ENCODE measurements at regions of chr6 and their contacts with region 1.

Region 1: DNA sequence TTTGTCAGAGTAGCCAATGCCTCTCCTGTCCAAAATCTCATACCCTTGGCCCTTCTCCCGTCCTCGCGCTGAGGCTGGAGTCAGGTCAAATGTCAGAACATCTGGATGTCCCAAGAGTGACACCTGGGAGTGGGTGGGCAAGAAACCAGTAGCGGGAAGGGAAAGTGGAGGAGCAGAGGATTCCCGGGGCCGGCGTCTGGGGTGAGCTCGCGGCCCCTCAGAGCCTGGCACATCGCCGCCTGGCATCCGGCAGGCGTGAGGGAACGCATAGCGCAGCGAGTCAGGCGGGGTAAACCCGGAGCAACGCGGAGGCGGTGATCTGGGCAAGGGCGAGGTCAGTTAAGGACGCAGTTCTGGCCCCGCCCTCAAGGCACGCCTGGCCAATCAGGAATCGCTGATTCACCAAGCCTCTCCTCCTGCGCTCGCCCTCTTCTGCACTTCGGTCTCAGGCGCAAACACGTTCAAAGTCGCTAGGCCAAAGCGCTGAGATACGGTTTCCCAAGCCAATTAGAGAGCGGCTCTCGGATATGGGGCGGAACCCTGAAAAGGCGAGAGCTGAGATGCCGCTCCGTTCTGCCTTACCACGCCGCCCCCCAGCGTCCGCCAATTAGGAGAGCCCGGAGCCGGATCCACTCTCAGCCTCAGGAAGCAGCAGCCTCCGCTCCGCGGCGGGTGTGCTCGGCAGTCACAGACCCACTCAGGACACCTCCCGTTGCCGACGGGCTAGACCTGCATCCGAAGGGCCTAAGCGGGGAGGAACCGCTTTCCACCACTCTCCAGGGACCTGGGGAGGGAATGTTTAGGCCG is 22.5 kb downstream of the VPS52 start:
- DNase-seq: peak; percentile 86
- ATAC-seq: peak; percentile 84
- H3K4me3 Mint-ChIP-seq: peak overlapping the region; percentile 91
- H3K27ac Mint-ChIP-seq: peak overlapping the region; percentile 91
- H3K4me1 Mint-ChIP-seq: peaks cover 28% of the 10 kb centered on the region
- H3K27me3 Mint-ChIP-seq: no peaks in the 10 kb centered on the region
- CTCF ChIP-seq: no peak

Region 2: GRCh38 chr6:32558426-32559057 is 690.6 kb before region 1 on chr6:
- CTCF ChIA-PET with region 1: no interaction called
- POLR2A ChIA-PET with region 1: no interaction called
- intact Hi-C with region 1: no loop called
- DNase-seq: no peak
- ATAC-seq: peak; percentile 54
- H3K4me3 Mint-ChIP-seq: peak overlapping the region; percentile 77
- H3K27ac Mint-ChIP-seq: peak overlapping the region; percentile 85
- H3K4me1 Mint-ChIP-seq: peaks cover 18% of the 10 kb centered on the region
- H3K27me3 Mint-ChIP-seq: no peaks in the 10 kb centered on the region
- CTCF ChIP-seq: no peak

Region 3: GRCh38 chr6:32984605-32985389 is 264.3 kb before region 1 on chr6:
- CTCF ChIA-PET with region 1: interaction called, 12 read pairs
- POLR2A ChIA-PET with region 1: interaction called, 3 read pairs
- intact Hi-C with region 1: no loop called
- DNase-seq: peak; percentile 74
- ATAC-seq: peak; percentile 90
- H3K4me3 Mint-ChIP-seq: no peak overlapping the region
- H3K27ac Mint-ChIP-seq: peak overlapping the region; percentile 73
- H3K4me1 Mint-ChIP-seq: peaks cover 32% of the 10 kb centered on the region
- H3K27me3 Mint-ChIP-seq: no peaks in the 10 kb centered on the region
- CTCF ChIP-seq: no peak

Region 4: DNA sequence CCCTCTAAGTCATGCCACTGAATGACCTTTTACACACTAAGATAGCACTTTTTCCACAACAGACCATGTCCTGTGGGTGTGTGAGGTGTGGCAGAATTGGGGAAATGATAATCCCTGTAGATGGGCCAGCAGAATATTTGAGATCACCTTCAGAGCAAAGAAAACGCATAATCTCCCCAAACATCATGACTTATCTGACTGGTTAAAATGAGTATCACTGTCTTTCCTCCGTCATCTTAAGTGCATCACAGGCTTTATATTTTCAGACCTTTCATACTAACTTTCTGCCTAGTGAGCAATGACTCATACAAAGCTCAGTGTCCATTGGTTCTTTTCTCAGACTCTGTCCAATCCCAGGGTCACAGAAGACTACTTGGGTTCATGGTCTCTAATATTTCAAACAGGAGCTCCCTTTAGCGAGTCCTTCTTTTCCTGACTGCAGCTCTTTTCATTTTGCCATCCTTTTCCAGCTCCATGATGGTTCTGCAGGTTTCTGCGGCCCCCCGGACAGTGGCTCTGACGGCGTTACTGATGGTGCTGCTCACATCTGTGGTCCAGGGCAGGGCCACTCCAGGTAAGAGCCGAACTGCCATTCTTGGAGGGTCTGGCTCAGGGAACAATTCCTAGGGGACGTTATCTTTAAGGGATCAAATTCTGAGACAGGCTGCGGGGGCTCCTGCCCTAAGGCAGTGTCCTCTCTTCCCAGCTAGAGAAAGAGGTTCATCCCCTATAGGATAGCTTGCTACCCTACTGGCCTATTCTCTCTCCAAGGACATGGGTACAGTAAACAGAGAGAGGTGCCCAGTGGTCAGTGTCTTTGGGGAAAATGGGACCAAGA is 173.3 kb before region 1 on chr6 and contains the start of gene HLA-DPB1:
- CTCF ChIA-PET with region 1: no interaction called
- POLR2A ChIA-PET with region 1: interaction called, 27 read pairs
- intact Hi-C with region 1: no loop called
- DNase-seq: peak; percentile 42
- ATAC-seq: peak; percentile 76
- H3K4me3 Mint-ChIP-seq: peak within 1 kb of the TSS; percentile 95
- H3K27ac Mint-ChIP-seq: peak within 1 kb of the TSS; percentile 99
- H3K4me1 Mint-ChIP-seq: peaks cover 66% of the 10 kb centered on the region
- H3K27me3 Mint-ChIP-seq: no peaks in the 10 kb centered on the region
- CTCF ChIP-seq: no peak
- total RNA-seq, gene HLA-DPB1: 853 and 854 TPM in 2 replicates

Region 5: DNA sequence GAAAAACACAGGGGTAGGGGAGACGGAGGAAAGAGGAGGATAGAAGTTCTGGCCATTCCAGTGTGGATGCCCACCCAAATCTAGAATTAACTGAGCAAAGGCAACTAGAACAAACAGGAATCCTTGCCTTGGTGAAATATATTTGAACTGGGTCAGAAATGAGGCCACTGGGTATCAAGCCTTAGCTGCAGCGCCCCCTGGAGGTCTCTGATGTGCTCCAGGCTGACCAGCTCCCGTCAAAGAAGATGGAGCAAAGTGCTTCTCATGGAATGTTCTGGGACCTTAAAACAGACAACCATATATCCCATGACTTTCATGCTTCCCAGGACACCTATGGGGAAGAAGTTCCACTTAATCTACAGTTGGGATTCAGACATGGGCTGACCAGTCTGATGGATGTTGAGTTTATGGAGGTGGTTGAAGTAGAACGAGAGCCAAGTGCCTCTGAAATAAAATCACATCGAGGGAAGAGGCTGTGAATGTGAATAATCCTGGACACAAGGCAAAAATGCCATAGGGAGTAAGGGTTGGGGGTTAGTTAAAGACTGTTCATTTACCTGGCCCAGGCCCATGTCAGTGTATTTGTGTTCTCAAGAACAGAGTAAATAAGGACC is 122.9 kb before region 1 on chr6:
- CTCF ChIA-PET with region 1: interaction called, 11 read pairs
- POLR2A ChIA-PET with region 1: interaction called, 7 read pairs
- intact Hi-C with region 1: loop called (anchors 1 kb)
- DNase-seq: peak; percentile 59
- ATAC-seq: peak; percentile 73
- H3K4me3 Mint-ChIP-seq: no peak overlapping the region
- H3K27ac Mint-ChIP-seq: no peak overlapping the region
- H3K4me1 Mint-ChIP-seq: peaks cover 4% of the 10 kb centered on the region
- H3K27me3 Mint-ChIP-seq: no peaks in the 10 kb centered on the region
- CTCF ChIP-seq: no peak

Region 6: GRCh38 chr6:33200219-33201146 is 48.6 kb before region 1 on chr6 and contains the starts of genes RXRB and SLC39A7:
- CTCF ChIA-PET with region 1: interaction called, 4 read pairs
- POLR2A ChIA-PET with region 1: interaction called, 13 read pairs
- intact Hi-C with region 1: loop called (anchors 1 kb)
- DNase-seq: peak; percentile 89
- ATAC-seq: peak; percentile 74
- H3K4me3 Mint-ChIP-seq: peak within 1 kb of the TSS; percentile 99
- H3K27ac Mint-ChIP-seq: peak within 1 kb of the TSS; percentile 96
- H3K4me1 Mint-ChIP-seq: peaks cover 75% of the 10 kb centered on the region
- H3K27me3 Mint-ChIP-seq: no peaks in the 10 kb centered on the region
- CTCF ChIP-seq: no peak
- total RNA-seq, gene RXRB: 72.4 and 74.3 TPM in 2 replicates
- total RNA-seq, gene SLC39A7: 31.7 and 35.2 TPM in 2 replicates

Region 7: DNA sequence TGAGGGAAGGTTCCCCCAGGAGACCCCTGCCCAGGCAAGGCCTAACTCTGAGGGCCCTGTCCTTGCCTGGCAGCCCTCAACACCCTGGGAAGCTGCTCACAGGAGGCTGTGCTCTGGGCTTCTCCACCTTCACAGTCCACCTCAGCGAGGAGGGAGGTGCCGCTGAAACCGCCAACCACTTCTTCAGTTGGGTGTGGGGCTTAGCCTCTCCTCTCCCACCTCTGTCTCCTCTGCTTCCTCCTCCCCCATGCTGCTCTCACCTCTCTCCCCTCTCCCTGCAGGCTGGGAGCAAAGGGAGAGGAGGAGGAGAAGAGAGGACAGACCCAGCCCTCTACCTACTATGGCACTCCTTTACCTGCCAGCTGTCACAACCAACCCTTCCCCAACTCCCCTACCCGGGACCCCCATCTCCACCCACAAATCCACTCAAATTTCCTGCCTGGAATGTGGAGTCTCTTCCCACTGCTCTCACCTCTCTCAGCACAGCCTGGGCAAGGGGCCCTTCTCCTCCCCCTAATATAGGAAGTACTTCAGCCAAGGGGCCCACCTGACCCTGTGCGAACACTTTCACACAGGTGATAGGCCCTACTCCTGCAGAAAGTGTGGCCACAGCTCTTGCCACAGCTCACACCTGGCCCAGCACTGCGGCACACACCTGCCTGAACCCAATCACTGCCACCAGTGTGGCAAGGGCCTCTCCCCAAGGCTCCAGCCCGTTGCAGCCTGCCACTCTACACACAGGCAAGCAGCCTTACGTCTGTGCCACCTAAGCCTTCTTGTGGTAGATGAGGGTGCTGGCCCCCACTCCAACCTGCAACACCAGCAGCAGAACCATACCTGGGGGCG is 33.6 kb before region 1 on chr6:
- CTCF ChIA-PET with region 1: no interaction called
- POLR2A ChIA-PET with region 1: no interaction called
- intact Hi-C with region 1: no loop called
- DNase-seq: no peak
- ATAC-seq: no peak
- H3K4me3 Mint-ChIP-seq: no peak overlapping the region
- H3K27ac Mint-ChIP-seq: no peak overlapping the region
- H3K4me1 Mint-ChIP-seq: peaks cover 18% of the 10 kb centered on the region
- H3K27me3 Mint-ChIP-seq: peaks cover 45% of the 10 kb centered on the region
- CTCF ChIP-seq: no peak

Region 8: GRCh38 chr6:33276864-33277662 is 27.9 kb after region 1 on chr6 and contains the start of gene B3GALT4:
- CTCF ChIA-PET with region 1: interaction called, 8 read pairs
- POLR2A ChIA-PET with region 1: interaction called, 55 read pairs
- intact Hi-C with region 1: no loop called
- DNase-seq: peak; percentile 77
- ATAC-seq: peak; percentile 68
- H3K4me3 Mint-ChIP-seq: peak within 1 kb of the TSS; percentile 92
- H3K27ac Mint-ChIP-seq: peak within 1 kb of the TSS; percentile 100
- H3K4me1 Mint-ChIP-seq: peaks cover 62% of the 10 kb centered on the region
- H3K27me3 Mint-ChIP-seq: no peaks in the 10 kb centered on the region
- CTCF ChIP-seq: no peak
- total RNA-seq, gene B3GALT4: 19.1 and 19.4 TPM in 2 replicates

Region 9: DNA sequence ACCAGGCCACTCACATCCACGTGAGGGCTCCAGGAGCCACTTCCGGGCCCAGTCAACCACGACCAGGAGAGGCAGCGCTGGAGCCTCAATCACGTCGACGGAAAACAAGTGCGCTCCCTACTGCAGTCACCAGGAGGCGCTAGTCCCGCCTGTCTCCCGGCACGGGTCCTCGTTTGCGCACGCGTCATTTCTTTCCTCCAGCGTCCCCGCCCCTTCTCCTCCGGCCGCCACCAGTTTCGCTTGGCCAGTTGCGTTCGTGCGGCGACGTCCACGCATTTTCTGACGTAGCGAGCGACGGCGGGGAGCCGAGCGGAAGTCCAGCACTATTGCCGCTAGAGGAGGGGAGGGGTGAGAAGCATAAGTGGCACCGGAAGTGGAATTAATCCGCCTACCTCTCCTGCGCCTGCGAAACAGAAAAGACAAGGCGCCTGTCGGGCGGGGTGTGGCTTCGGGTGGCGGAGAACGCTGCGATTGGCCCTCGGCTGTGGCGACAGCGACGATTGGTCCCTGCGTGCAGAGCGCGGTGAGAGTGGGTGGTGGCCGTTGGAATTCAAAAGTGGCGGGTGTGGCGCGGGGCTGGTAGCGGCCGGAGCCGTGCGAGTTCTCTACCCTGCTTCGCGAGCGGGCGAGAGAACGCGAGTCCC is 142.3 kb after region 1 on chr6 and contains the start of gene KIFC1:
- CTCF ChIA-PET with region 1: no interaction called
- POLR2A ChIA-PET with region 1: interaction called, 3 read pairs
- intact Hi-C with region 1: loop called (anchors 1 kb)
- DNase-seq: peak; percentile 95
- ATAC-seq: peak; percentile 88
- H3K4me3 Mint-ChIP-seq: peak within 1 kb of the TSS; percentile 79
- H3K27ac Mint-ChIP-seq: peak within 1 kb of the TSS; percentile 95
- H3K4me1 Mint-ChIP-seq: peaks cover 25% of the 10 kb centered on the region
- H3K27me3 Mint-ChIP-seq: no peaks in the 10 kb centered on the region
- CTCF ChIP-seq: peak; percentile 77
- total RNA-seq, gene KIFC1: 1.9 and 2.2 TPM in 2 replicates

Region 10: GRCh38 chr6:33535104-33535603 is 286.0 kb after region 1 on chr6:
- CTCF ChIA-PET with region 1: no interaction called
- POLR2A ChIA-PET with region 1: no interaction called
- intact Hi-C with region 1: no loop called
- DNase-seq: no peak
- ATAC-seq: no peak
- H3K4me3 Mint-ChIP-seq: no peak overlapping the region
- H3K27ac Mint-ChIP-seq: no peak overlapping the region
- H3K4me1 Mint-ChIP-seq: no peaks in the 10 kb centered on the region
- H3K27me3 Mint-ChIP-seq: no peaks in the 10 kb centered on the region
- CTCF ChIP-seq: no peak

Region 11: GRCh38 chr6:34044945-34045595 is 795.9 kb after region 1 on chr6:
- CTCF ChIA-PET with region 1: no interaction called
- POLR2A ChIA-PET with region 1: no interaction called
- intact Hi-C with region 1: no loop called
- DNase-seq: no peak
- ATAC-seq: peak; percentile 42
- H3K4me3 Mint-ChIP-seq: no peak overlapping the region
- H3K27ac Mint-ChIP-seq: no peak overlapping the region
- H3K4me1 Mint-ChIP-seq: peaks cover 9% of the 10 kb centered on the region
- H3K27me3 Mint-ChIP-seq: peaks cover 6% of the 10 kb centered on the region
- CTCF ChIP-seq: no peak

Measured in activated B cell treated with CpG ODN at 0.5 μM for 24 hours (primary cell).